PC-9 (cell line): ENCODE measurements at regions of chr16 and their contacts with region 1.

Region 1: DNA sequence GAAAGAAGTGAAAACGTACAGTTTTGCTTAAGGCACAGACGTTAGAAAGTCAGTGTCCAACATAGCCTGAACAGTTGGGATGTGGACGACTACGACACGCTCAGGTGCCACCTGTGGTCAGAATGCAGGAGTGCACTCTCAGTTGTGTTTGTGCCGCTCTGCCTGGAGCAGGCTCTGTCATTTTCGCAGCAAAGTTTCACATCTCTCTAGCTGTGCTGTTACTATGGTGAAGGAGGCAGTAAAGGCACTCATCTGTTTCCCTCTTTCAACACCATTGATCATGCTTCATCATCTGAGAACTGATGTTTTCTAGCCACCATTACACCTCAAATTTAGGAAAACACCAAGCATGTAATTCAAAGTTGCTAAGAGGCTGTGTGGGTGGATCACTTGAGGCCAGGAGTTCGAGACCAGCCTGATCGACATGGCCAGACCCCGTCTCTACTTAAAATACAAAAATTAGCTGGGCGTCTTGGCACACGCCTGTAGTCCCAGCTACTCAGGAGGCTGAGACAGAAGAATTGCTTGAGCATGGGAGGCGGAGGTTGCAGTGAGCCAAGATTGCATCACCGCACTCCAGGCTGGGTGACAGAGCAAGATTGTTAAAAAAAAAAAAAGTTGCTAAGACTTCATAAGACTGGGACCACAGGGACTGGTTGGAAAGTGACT is 44.9 kb upstream of the DNAJA2 start:
- DNase-seq: peak; percentile 50 to 53
- H3K4me3 ChIP-seq: no peak overlapping the region
- H3K27ac ChIP-seq: no peak overlapping the region
- H3K4me1 ChIP-seq: no peaks in the 10 kb centered on the region
- H3K27me3 ChIP-seq: no peaks in the 10 kb centered on the region
- CTCF ChIP-seq: peak; percentile 67

Region 2: GRCh38 chr16:46908540-46909372 is 109.6 kb before region 1 on chr16:
- CTCF ChIA-PET with region 1: no interaction called
- POLR2A ChIA-PET with region 1: no interaction called
- intact Hi-C with region 1: no loop called
- DNase-seq: peak; percentile 44 to 52
- H3K4me3 ChIP-seq: no peak overlapping the region
- H3K27ac ChIP-seq: no peak overlapping the region
- H3K4me1 ChIP-seq: no peaks in the 10 kb centered on the region
- H3K27me3 ChIP-seq: no peaks in the 10 kb centered on the region
- CTCF ChIP-seq: peak; percentile 89

Region 3: GRCh38 chr16:46947900-46948547 is 70.3 kb before region 1 on chr16:
- CTCF ChIA-PET with region 1: no interaction called
- POLR2A ChIA-PET with region 1: no interaction called
- intact Hi-C with region 1: loop called (anchors 1 kb)
- DNase-seq: peak; percentile 20 to 41
- H3K4me3 ChIP-seq: no peak overlapping the region
- H3K27ac ChIP-seq: no peak overlapping the region
- H3K4me1 ChIP-seq: no peaks in the 10 kb centered on the region
- H3K27me3 ChIP-seq: no peaks in the 10 kb centered on the region
- CTCF ChIP-seq: peak; percentile 80

Region 4: GRCh38 chr16:46982335-46982734 is 36.0 kb before region 1 on chr16:
- CTCF ChIA-PET with region 1: interaction called, 11 read pairs
- POLR2A ChIA-PET with region 1: no interaction called
- intact Hi-C with region 1: no loop called
- DNase-seq: no peak
- H3K4me3 ChIP-seq: no peak overlapping the region
- H3K27ac ChIP-seq: no peak overlapping the region
- H3K4me1 ChIP-seq: no peaks in the 10 kb centered on the region
- H3K27me3 ChIP-seq: no peaks in the 10 kb centered on the region
- CTCF ChIP-seq: no peak

Region 5: DNA sequence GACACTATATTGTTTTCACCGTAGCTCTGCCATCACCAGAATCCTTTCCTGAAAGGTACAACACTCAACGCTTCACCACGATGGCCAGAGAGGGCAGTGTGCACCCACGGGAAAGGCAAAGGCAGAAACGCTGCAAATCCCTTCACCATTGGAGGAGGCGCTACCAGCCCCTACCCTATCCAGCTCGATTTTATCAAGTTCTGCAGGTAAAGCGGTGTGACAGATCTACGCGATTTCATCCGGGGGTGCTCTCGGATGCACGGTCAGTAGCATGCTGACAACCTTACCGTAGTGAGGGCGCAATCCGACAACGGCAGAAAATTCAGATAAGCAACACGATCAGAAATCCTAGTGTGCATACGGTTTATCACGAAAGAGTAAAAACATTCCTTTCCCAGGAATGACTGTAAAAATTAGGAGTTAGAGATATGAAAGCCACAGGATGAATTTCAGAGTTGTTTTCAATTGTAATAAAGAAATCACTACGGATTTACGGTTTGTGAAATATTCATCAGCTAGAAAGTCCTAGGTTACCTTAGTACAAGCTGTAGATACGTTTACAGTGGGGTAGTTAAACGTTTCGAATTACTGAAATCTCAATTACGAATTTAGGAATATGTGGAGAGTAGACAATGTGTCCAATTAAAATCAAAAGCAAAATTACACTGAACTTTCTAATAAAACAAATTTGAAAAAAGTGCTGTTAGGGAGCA is 123.6 kb after region 1 on chr16:
- CTCF ChIA-PET with region 1: no interaction called
- POLR2A ChIA-PET with region 1: no interaction called
- intact Hi-C with region 1: no loop called
- DNase-seq: peak; percentile 83 to 86
- H3K4me3 ChIP-seq: peak overlapping the region; percentile 75
- H3K27ac ChIP-seq: peak overlapping the region; percentile 17; the same call in 1 of the 2 replicates
- H3K4me1 ChIP-seq: peaks cover 25% of the 10 kb centered on the region
- H3K27me3 ChIP-seq: no peaks in the 10 kb centered on the region
- CTCF ChIP-seq: peak; percentile 90